Endothelial cell of umbilical vein (primary cell): ENCODE measurements at regions of chr18 and their contacts with region 1.

Region 1: GRCh38 chr18:77000527-77000926 is 132.1 kb downstream of the MBP start:
- DNase-seq: peak; percentile 46
- H3K4me3 ChIP-seq: no peak overlapping the region
- H3K27ac ChIP-seq: no peak overlapping the region
- H3K4me1 ChIP-seq: no peaks in the 10 kb centered on the region
- H3K27me3 ChIP-seq: peaks cover 1 to 8% of the 10 kb centered on the region in 2 experiments
- CTCF ChIP-seq: peak; percentile 90 to 94
- POLR2A ChIP-seq: no peak

Region 2: GRCh38 chr18:76847916-76848315 is 152.6 kb before region 1 on chr18:
- CTCF ChIA-PET with region 1: no interaction called
- POLR2A ChIA-PET with region 1: no interaction called
- dilution Hi-C with region 1: no loop called
- intact Hi-C with region 1: no loop called
- DNase-seq: peak; percentile 17
- H3K4me3 ChIP-seq: no peak overlapping the region
- H3K27ac ChIP-seq: no peak overlapping the region
- H3K4me1 ChIP-seq: no peaks in the 10 kb centered on the region
- H3K27me3 ChIP-seq: no peaks in the 10 kb centered on the region
- CTCF ChIP-seq: no peak
- POLR2A ChIP-seq: no peak

Region 3: DNA sequence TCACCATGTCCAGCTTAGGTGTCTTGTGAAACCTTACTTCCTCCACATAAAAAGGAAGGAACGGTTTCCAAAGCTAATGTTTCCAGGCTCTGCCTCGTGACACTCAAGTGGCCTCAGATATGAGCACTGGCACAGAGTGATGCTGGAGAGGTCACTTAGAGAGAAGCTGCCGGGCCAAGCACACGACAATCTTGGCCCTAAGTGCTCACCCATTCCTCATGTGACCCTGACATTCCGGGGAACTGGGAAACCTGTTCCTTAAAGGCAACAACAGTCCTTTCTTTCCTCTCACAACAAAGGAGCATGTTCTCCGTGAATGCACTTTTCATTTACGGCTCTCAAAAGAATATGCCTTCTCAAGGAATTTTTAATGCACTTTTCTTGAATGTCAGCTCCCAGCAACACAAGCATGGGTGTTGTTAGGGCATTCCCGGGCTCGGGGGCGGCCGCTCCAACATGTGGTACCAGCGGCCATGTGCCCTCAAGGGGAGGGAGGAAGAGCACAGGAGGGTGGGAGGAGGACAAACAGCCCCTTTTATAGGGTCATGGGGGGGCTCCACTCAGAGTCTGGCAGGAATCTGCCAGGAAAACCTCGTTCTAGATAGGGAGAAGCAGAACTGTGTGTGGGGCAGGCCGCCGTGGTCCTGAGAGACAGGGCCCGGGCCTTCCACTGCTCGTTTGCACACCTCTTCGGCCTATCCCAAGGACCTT is 13.4 kb after region 1 on chr18:
- CTCF ChIA-PET with region 1: interaction called, 19 read pairs
- POLR2A ChIA-PET with region 1: no interaction called
- dilution Hi-C with region 1: no loop called
- intact Hi-C with region 1: no loop called
- DNase-seq: no peak
- H3K4me3 ChIP-seq: no peak overlapping the region
- H3K27ac ChIP-seq: no peak overlapping the region
- H3K4me1 ChIP-seq: no peaks in the 10 kb centered on the region
- H3K27me3 ChIP-seq: peaks cover 0 to 4% of the 10 kb centered on the region in 2 experiments
- CTCF ChIP-seq: no peak
- POLR2A ChIP-seq: no peak

Region 4: DNA sequence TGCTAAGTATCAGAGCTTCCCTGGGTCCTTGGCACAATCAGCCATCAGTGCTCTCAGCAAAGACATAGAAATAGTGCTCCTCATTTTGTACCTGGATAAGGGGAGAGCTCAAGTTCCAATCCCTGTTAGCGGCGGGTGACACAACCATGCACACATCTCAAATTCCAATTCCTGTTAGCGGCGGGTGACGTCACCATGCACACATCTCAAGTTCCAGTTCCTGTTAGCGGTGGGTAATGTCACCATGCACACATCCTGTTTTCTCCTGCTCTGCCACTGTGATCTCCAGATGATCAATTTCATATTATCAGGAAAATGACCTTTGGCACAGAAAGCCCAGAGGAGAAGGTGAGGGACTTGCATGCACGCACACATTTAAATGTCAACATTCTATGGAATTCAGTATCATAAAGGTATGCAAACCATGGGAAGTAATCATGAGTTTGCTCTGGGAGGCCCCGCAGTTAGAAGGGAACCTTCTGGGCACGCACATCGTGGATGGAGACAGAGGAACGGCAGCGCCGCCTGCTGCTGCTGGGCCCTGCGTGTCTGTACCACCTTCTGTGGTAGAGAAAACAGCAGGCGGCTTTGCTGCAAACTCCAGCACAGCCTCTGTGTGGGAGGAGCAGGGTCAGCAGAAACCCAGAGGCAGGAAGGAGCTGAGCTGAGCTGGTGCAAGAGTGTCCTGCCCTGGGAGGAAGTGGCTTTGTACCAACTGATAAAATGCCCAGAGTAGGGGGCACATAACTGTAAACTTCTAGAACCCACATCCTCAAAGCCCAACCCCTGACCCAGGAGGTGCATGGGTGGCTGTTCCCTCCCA is 54.3 kb after region 1 on chr18:
- CTCF ChIA-PET with region 1: interaction called, 31 read pairs
- POLR2A ChIA-PET with region 1: no interaction called
- dilution Hi-C with region 1: no loop called
- intact Hi-C with region 1: loop called (anchors 1 kb)
- DNase-seq: peak; percentile 88
- H3K4me3 ChIP-seq: peak overlapping the region in 1 of 3 experiments; percentile 17
- H3K27ac ChIP-seq: peak overlapping the region; percentile 37
- H3K4me1 ChIP-seq: peaks cover 22% of the 10 kb centered on the region
- H3K27me3 ChIP-seq: no peaks in the 10 kb centered on the region
- CTCF ChIP-seq: peak; percentile 64 to 84
- POLR2A ChIP-seq: no peak

Region 5: GRCh38 chr18:77087393-77088141 is 87.0 kb after region 1 on chr18:
- CTCF ChIA-PET with region 1: interaction called, 3 read pairs
- POLR2A ChIA-PET with region 1: no interaction called
- dilution Hi-C with region 1: no loop called
- intact Hi-C with region 1: loop called (anchors 1 kb)
- DNase-seq: peak; percentile 37
- H3K4me3 ChIP-seq: peak overlapping the region; percentile 6 to 49 (median 40)
- H3K27ac ChIP-seq: peak overlapping the region; percentile 74
- H3K4me1 ChIP-seq: peaks cover 13% of the 10 kb centered on the region
- H3K27me3 ChIP-seq: no peaks in the 10 kb centered on the region
- CTCF ChIP-seq: no peak
- POLR2A ChIP-seq: no peak

Region 6: DNA sequence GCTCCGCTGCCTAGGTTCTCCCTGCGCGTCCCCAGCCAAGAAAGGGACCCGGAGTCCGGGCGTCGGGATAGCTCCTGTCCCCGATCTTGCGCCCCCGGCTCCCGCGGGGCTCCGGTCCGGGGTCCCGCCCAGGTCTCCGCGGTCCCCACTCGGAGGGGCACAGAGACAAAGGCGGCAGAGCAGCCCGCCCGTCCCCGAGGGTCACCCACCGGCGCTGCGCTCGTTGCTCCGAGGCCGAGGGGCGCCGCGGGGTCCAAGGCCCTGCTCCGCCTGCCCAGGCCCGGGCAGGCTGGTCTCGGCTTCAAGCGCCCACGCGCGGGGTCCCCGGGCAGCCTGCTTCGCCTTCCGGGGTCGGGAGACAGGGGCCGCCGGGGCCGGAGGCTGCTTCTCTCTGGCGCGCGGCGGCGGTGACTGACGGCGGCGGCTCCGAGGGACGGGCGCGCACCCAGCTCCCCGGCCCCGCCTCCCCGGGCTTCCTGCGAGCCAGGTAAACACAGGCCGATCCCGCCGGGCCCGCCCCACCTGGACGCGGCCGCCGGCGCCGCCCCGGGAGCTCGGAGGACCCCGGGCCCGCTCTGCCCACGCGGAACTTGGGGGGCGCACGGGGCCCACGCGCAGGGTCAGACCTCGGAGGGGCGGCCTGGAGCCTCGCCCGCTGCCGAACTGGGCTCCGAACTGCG is 132.0 kb after region 1 on chr18 and contains the start of gene MBP:
- CTCF ChIA-PET with region 1: interaction called, 4 read pairs
- POLR2A ChIA-PET with region 1: no interaction called
- dilution Hi-C with region 1: no loop called
- intact Hi-C with region 1: loop called (anchors 5 kb)
- DNase-seq: no peak
- H3K4me3 ChIP-seq: peak within 1 kb of the TSS; percentile 44 to 48 (median 46)
- H3K27ac ChIP-seq: no peak within 1 kb of the TSS
- H3K4me1 ChIP-seq: peaks cover 13% of the 10 kb centered on the region
- H3K27me3 ChIP-seq: peaks cover 4 to 28% of the 10 kb centered on the region in 2 experiments
- CTCF ChIP-seq: no peak
- POLR2A ChIP-seq: no peak
- total RNA-seq, gene MBP: 1.7 and 4.0 TPM in 2 replicates